CD8-positive, alpha-beta T cell (primary cell): ENCODE measurements at regions of chrX and their contacts with region 1.

Region 1: DNA sequence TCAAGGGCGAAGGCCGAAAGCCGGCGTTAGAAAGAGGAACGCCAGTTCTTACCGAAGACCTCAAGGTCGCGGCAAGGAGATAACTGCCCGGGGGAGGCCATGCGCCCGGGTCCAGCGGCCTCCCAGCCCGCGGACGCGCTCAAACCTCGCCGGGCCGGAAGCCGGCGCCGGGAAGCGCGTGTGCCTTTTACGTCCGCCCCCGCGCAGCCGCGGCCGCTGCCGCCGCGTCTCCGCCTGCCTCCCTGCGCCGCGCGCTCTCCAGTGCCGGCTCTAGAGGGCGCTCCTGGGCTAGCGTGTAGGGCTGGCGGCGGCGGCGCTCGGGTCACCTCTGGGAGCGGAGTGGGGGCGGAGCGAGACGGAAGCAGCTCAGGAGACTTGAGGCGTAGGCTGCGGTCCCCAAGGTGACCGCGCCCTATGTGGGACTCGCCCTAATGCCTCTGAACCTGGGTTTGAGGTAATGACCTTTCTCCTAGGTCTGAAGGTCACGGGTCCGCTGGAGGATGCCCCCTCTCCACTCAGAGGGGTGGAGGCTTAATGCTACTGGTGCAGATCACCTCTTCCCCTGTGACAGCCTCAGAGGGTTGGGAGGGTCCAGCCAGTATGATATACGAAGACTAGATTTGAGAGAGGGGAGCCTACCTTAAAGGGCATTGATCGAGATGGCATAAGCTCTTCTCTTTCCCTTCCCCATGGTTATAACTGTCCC is 839 bp downstream of the SLC25A5 start:
- DNase-seq: peak; percentile 73 to 92 (median 87)
- ATAC-seq: peak; percentile 76
- H3K4me3 ChIP-seq: peak overlapping the region; percentile 86 to 91
- H3K4me3 Mint-ChIP-seq: peak overlapping the region; percentile 87
- H3K27ac ChIP-seq: peak overlapping the region; percentile 88 to 96
- H3K27ac Mint-ChIP-seq: peak overlapping the region; percentile 89
- H3K4me1 ChIP-seq: peaks cover 15% of the 10 kb centered on the region
- H3K4me1 Mint-ChIP-seq: peaks cover 11% of the 10 kb centered on the region
- H3K27me3 ChIP-seq: no peaks in the 10 kb centered on the region
- H3K27me3 Mint-ChIP-seq: no peaks in the 10 kb centered on the region
- CTCF ChIP-seq: peak; percentile 57

Region 2: GRCh38 chrX:118345401-118346257 is 1123.5 kb before region 1 on chrX and contains the start of gene WDR44:
- CTCF ChIA-PET with region 1: no interaction called
- POLR2A ChIA-PET with region 1: no interaction called
- intact Hi-C with region 1: loop called (anchors 5 to 10 kb)
- DNase-seq: peak; percentile 86 to 96 (median 90)
- ATAC-seq: peak; percentile 90
- H3K4me3 ChIP-seq: peak within 1 kb of the TSS; percentile 70 to 87
- H3K4me3 Mint-ChIP-seq: peak within 1 kb of the TSS; percentile 98
- H3K27ac ChIP-seq: peak within 1 kb of the TSS; percentile 87 to 89
- H3K27ac Mint-ChIP-seq: peak within 1 kb of the TSS; percentile 97
- H3K4me1 ChIP-seq: peaks cover 26% of the 10 kb centered on the region
- H3K4me1 Mint-ChIP-seq: peaks cover 34% of the 10 kb centered on the region
- H3K27me3 ChIP-seq: no peaks in the 10 kb centered on the region
- H3K27me3 Mint-ChIP-seq: no peaks in the 10 kb centered on the region
- CTCF ChIP-seq: no peak
- total RNA-seq, gene WDR44: 9.9 to 11.2 TPM

Region 3: GRCh38 chrX:119235872-119236622 is 233.0 kb before region 1 on chrX and contains the start of gene PGRMC1:
- CTCF ChIA-PET with region 1: no interaction called
- POLR2A ChIA-PET with region 1: no interaction called
- intact Hi-C with region 1: loop called (anchors 5 to 10 kb)
- DNase-seq: peak; percentile 51 to 90 (median 76)
- ATAC-seq: peak; percentile 94
- H3K4me3 ChIP-seq: peak within 1 kb of the TSS; percentile 55 to 68
- H3K4me3 Mint-ChIP-seq: peak within 1 kb of the TSS; percentile 83
- H3K27ac ChIP-seq: peak within 1 kb of the TSS; percentile 25 to 63
- H3K27ac Mint-ChIP-seq: peak within 1 kb of the TSS; percentile 91
- H3K4me1 ChIP-seq: peaks cover 8% of the 10 kb centered on the region
- H3K4me1 Mint-ChIP-seq: peaks cover 39% of the 10 kb centered on the region
- H3K27me3 ChIP-seq: no peaks in the 10 kb centered on the region
- H3K27me3 Mint-ChIP-seq: no peaks in the 10 kb centered on the region
- CTCF ChIP-seq: no peak
- total RNA-seq, gene PGRMC1: 15.2 to 18.4 TPM

Region 4: DNA sequence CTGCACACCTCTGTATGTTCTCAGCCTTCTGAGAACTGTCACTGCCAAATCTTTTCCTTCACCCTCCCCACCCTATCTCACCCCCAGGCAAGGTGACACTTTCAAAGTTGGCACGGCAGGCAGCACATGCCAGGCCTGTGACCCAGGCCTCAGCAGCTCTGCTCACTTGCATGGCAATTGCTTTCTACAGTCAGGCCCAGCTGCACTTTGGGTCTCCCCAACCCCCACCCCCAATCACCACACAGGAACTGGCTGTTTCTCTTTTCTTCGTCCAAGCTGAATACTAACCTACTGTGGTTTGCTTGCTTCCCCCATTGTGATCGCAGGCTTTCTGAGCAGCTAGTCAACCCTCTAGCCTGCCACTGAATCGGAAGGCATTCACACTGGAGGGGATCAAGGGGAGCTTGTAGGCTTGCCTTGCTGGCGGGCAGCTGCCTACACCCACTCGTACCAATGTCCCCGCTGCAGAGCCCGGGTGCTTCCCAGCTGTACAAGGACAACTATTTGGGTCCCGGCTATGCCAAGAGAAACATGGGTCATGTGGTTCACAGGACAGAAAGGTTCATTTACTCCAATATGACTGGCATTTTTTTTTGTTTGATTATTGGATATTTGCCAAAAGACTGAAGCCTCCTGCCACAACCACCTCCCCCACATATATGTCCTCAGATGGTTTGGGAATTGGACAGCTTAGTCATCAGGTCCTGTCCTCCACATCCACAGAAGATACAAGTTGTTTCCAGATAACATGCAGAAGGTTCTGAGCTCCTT is 41.9 kb before region 1 on chrX:
- CTCF ChIA-PET with region 1: no interaction called
- POLR2A ChIA-PET with region 1: no interaction called
- intact Hi-C with region 1: no loop called
- DNase-seq: peak in 7 of 9 experiments; percentile 0 to 56 (median 10)
- ATAC-seq: peak; percentile 34
- H3K4me3 ChIP-seq: no peak overlapping the region
- H3K4me3 Mint-ChIP-seq: peak overlapping the region; percentile 22
- H3K27ac ChIP-seq: peak overlapping the region in 1 of 2 experiments; percentile 49
- H3K27ac Mint-ChIP-seq: peak overlapping the region; percentile 88
- H3K4me1 ChIP-seq: peaks cover 24% of the 10 kb centered on the region
- H3K4me1 Mint-ChIP-seq: peaks cover 18% of the 10 kb centered on the region
- H3K27me3 ChIP-seq: no peaks in the 10 kb centered on the region
- H3K27me3 Mint-ChIP-seq: no peaks in the 10 kb centered on the region
- CTCF ChIP-seq: no peak

Region 5: DNA sequence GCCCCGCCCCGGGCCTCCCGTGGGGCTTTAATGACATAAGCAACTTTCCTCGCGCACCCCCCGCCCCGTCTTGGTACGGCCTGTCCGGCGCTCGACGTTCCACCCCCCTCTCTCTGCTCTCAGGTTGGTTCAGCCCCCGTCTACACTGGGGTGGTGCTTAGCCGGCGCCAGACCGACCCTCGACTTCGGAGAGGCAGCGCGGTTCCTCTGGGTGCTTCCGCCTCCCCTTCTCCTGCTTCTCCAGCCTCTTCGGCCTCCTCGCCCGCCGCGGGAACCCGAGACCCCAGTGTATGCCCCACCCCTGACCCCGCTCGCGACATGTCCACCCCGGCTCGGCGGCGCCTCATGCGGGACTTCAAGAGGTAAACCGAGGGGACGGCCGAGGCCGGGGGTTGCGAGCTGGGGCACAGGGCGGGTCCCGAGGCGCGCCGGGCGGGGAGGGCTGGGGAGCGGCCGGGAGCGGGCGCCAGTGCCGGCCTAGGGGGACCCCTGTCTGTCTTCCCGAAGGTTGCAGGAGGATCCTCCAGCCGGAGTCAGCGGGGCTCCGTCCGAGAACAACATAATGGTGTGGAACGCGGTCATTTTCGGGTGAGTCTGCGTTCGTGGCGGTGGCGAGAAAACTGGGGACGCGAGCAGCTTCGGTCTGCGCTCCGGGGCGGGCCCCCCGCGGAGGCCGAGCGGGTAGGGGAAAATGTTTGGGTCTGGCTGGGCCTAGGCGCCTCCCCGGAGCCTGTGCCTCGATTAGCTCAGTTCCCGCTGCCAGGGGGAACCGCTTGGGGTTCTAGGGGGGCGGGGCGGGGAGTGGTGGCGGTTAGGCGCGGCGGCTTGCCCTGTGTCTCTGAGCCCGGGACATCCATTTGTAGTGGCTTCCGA is 105.5 kb after region 1 on chrX and contains the start of gene UBE2A:
- CTCF ChIA-PET with region 1: no interaction called
- POLR2A ChIA-PET with region 1: no interaction called
- intact Hi-C with region 1: loop called (anchors 2 to 5 kb)
- DNase-seq: peak; percentile 80 to 95 (median 89)
- ATAC-seq: peak; percentile 95
- H3K4me3 ChIP-seq: peak within 1 kb of the TSS; percentile 70 to 73
- H3K4me3 Mint-ChIP-seq: peak within 1 kb of the TSS; percentile 92
- H3K27ac ChIP-seq: peak within 1 kb of the TSS; percentile 80 to 83
- H3K27ac Mint-ChIP-seq: peak within 1 kb of the TSS; percentile 92
- H3K4me1 ChIP-seq: peaks cover 8% of the 10 kb centered on the region
- H3K4me1 Mint-ChIP-seq: peaks cover 20% of the 10 kb centered on the region
- H3K27me3 ChIP-seq: no peaks in the 10 kb centered on the region
- H3K27me3 Mint-ChIP-seq: no peaks in the 10 kb centered on the region
- CTCF ChIP-seq: no peak
- total RNA-seq, gene UBE2A: 101 to 103 TPM

Region 6: DNA sequence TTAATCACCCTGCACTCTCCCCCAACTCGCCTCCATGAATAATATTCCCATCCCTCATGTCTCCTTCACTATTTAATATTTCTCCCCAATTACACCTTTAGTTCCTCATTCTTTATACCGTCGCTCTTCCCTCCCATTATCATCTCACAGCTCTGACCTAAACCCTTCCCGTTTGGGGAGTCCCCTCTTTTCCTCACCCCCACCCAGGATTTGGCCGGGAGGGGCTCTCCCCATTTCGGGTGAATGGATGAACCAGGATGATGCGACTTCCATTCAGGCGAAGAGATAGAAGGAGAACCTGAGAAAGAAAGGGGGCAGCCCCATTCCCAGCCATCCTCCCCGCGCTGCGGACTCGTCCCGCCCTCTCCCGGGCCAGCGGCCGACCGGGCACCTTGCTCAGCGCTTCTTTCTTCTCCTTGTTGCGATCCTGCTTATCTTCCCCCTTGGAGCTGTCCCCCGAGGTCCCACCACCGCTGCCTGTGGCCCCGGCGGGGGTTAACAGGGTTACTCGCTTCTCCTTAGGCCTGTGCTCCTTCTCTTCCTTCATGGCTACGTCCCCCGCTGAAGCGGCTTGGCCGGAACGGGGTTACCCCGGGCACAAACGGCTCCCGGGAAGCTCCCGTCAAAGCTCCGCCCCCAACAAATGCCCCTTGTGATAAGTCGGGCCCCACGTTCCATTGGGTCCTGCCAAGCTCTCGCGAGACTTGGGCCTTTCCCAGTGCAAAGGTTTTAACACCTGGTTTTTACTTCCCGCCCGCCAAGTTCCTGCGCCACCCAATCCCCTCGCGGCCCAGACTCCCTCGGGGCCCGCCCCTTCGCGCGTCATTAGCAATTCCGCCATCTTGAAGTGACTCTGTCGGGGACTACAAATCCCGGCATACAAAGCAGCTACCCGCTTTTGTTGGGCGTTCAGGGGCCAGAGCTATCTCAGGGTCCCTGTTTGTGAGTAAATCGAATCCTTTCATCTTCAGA is 383.6 kb after region 1 on chrX and contains the start of gene UPF3B:
- CTCF ChIA-PET with region 1: no interaction called
- POLR2A ChIA-PET with region 1: no interaction called
- intact Hi-C with region 1: loop called in 1 of 2 experiments (anchors 5 kb)
- DNase-seq: peak; percentile 82 to 98 (median 92)
- ATAC-seq: peak; percentile 97
- H3K4me3 ChIP-seq: peak within 1 kb of the TSS; percentile 95 to 96
- H3K4me3 Mint-ChIP-seq: peak within 1 kb of the TSS; percentile 99
- H3K27ac ChIP-seq: peak within 1 kb of the TSS; percentile 87 to 97
- H3K27ac Mint-ChIP-seq: peak within 1 kb of the TSS; percentile 98
- H3K4me1 ChIP-seq: peaks cover 7% of the 10 kb centered on the region
- H3K4me1 Mint-ChIP-seq: peaks cover 18% of the 10 kb centered on the region
- H3K27me3 ChIP-seq: no peaks in the 10 kb centered on the region
- H3K27me3 Mint-ChIP-seq: no peaks in the 10 kb centered on the region
- CTCF ChIP-seq: no peak
- total RNA-seq, gene UPF3B: 5.6 to 8.4 TPM

Region 7: GRCh38 chrX:119943185-119943988 is 474.3 kb after region 1 on chrX and contains the start of gene NKAP:
- CTCF ChIA-PET with region 1: no interaction called
- POLR2A ChIA-PET with region 1: no interaction called
- intact Hi-C with region 1: loop called (anchors 5 to 10 kb)
- DNase-seq: peak; percentile 59 to 90 (median 78)
- ATAC-seq: peak; percentile 82
- H3K4me3 ChIP-seq: peak within 1 kb of the TSS; percentile 94
- H3K4me3 Mint-ChIP-seq: peak within 1 kb of the TSS; percentile 97
- H3K27ac ChIP-seq: peak within 1 kb of the TSS; percentile 91 to 93
- H3K27ac Mint-ChIP-seq: peak within 1 kb of the TSS; percentile 97
- H3K4me1 ChIP-seq: peaks cover 18% of the 10 kb centered on the region
- H3K4me1 Mint-ChIP-seq: peaks cover 24% of the 10 kb centered on the region
- H3K27me3 ChIP-seq: no peaks in the 10 kb centered on the region
- H3K27me3 Mint-ChIP-seq: peaks cover under 1% of the 10 kb centered on the region
- CTCF ChIP-seq: no peak
- total RNA-seq, gene NKAP: 17.4 to 20.1 TPM